AG04450 (cell line): ENCODE measurements at regions of chr19 and their contacts with region 1.

Region 1: DNA sequence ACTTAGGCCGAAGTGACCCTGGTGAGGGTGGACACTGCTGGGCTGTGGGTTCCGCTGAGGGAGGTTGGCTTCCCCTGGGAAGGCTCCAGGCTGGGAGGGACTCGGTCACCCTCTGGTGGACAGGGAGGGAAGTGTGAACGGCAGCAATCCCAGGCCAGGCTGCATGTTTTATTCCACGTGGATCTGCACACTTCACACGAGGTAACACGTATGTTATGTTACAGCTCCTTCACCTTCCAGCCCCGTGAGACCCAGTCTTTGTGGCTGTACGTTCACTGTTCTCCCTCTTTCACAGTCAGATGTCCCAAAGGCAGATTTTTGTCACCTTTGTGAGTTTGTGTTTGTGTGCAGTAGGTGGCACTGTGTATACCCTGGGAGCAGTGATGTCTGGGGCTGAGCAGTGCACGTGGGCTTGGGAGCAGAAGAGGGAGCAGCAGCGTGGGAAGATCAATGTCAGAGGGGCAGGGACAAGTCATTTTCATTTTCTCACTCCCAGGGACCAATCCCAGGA is 1.9 kb upstream of the PSG6 start:
- DNase-seq: no peak
- H3K4me3 ChIP-seq: no peak overlapping the region
- H3K27ac ChIP-seq: no peak overlapping the region
- H3K27me3 ChIP-seq: no peaks in the 10 kb centered on the region
- CTCF ChIP-seq: peak; percentile 29

Region 2: GRCh38 chr19:42989851-42990250 is 70.3 kb after region 1 on chr19:
- CTCF ChIA-PET with region 1: interaction called, 10 read pairs
- POLR2A ChIA-PET with region 1: no interaction called
- DNase-seq: no peak
- H3K4me3 ChIP-seq: no peak overlapping the region
- H3K27ac ChIP-seq: no peak overlapping the region
- H3K27me3 ChIP-seq: no peaks in the 10 kb centered on the region
- CTCF ChIP-seq: no peak